SK-N-SH (cell line): ENCODE measurements at regions of chr17 and their contacts with region 1.

Region 1: GRCh38 chr17:63478791-63479494 is 2.1 kb downstream of the ACE start:
- DNase-seq: peak; percentile 94
- H3K4me3 ChIP-seq: no peak overlapping the region
- H3K27ac ChIP-seq: peak overlapping the region in 1 of 2 experiments; percentile 84; a peak in 2 of 4 replicates
- H3K4me1 ChIP-seq: peaks cover 9 to 67% of the 10 kb centered on the region in 2 experiments
- H3K27me3 ChIP-seq: no peaks in the 10 kb centered on the region
- CTCF ChIP-seq: peak; percentile 98
- EP300 ChIP-seq: no peak
- RAD21 ChIP-seq: peak; percentile 88

Region 2: DNA sequence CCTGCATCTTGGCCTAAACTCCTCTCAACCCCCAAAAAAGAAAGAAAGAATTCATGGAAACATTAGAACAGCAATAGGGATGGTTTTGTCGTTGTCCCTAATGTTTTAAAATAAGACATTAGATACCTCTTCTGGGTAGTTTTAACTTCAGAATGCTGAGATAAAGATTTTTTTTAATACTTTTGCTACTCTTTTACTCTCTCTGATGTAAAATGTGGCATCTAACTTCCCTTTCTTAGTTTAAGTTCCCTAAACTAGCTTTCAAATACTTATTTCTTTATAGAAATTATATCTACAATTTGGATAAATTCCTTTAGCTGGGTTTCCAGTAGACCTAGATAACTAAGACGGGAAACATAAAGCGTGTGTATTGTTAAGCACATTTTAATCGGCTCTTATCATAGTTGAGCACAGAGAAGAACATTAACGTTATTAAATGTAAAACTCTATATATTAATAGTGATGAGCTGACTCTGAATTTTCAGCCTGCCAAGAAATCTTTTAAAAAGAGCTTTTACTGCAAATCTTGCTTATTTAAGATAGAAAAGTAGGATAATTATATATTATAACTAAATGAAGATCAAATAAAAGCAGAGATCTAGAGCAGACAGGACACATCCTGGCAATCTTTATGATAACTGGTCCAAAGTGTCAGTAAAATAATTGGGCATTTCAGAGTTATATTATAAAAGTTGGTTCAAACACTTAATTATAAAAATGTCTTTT is 216.0 kb before region 1 on chr17:
- CTCF ChIA-PET with region 1: no interaction called
- POLR2A ChIA-PET with region 1: no interaction called
- DNase-seq: no peak
- H3K4me3 ChIP-seq: no peak overlapping the region
- H3K27ac ChIP-seq: no peak overlapping the region; a peak in 1 of 4 replicates
- H3K4me1 ChIP-seq: peaks cover 0 to 2% of the 10 kb centered on the region in 2 experiments; a peak in 3 of 4 replicates
- H3K27me3 ChIP-seq: no peaks in the 10 kb centered on the region
- CTCF ChIP-seq: no peak
- EP300 ChIP-seq: no peak
- RAD21 ChIP-seq: no peak

Region 3: DNA sequence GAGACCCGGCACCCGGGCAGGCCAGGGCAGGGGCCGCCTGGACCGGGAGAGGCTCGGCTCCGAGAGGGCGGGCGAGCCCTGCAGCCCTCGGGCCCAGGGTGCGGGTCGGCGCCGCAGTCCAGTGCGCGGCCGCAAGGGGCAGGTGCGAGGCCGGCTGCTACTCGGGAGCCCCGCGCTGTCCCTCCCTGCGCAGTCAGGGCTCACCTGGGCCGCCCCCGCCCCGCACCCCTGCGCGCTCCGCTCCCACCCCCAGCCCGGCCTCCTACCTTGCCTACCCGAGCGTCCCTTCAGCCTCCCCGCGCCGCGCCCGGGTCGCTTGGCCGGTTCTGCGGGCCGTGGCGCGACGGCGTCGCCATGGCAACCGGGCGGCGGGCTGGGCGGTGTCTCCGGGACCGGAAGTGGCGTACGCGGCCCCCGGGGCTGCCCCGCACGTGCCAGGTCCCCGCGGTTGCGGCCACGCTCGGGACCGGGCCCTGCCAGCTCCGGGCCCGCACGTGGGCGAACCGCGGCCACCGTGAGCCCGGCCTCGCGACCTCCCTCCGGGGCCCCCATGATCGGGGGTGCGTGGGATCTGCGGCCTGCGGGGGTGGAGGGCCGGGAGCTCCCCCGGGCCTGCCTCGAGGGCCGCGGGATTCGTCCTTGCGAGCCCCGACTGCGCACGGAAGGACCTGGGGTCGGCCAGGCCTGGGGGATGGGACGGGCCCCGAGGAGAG is 32.8 kb before region 1 on chr17 and contains the start of gene CYB561:
- CTCF ChIA-PET with region 1: interaction called, 708 read pairs
- POLR2A ChIA-PET with region 1: interaction called, 212 read pairs
- DNase-seq: peak; percentile 97
- H3K4me3 ChIP-seq: peak within 1 kb of the TSS; percentile 56 to 64
- H3K27ac ChIP-seq: peak within 1 kb of the TSS; percentile 19 to 99; a peak in 2 of 4 replicates
- H3K4me1 ChIP-seq: peaks cover 8 to 69% of the 10 kb centered on the region in 2 experiments
- H3K27me3 ChIP-seq: no peaks in the 10 kb centered on the region
- CTCF ChIP-seq: peak; percentile 54
- EP300 ChIP-seq: no peak
- RAD21 ChIP-seq: peak; percentile 32
- polyA plus RNA-seq, gene CYB561: 28.3 and 38.6 TPM in 2 replicates

Region 4: DNA sequence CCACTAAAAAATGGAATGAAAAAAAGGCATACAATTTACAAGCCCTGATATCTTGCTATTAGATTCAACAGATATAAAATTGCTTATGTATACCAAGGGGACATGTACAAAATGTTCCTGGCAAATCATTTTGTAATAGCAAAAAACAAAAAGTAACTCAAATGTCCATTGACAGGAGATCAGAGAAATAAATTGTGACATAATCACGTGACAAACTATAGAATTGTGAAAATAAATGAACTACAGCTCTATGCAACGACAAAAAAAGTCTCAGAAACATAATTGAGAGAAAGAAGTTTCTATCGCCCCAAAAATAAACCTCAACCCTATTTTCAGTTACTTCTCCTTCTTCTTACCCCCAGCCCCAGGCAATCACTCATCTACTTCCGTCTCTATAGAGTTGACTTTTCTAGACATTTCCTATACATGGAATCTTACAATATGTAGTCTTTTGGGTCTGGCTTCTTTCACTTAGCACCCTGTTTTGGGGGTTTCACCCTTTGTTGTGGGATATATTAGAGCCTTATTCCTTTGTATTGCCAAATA is 14.2 kb before region 1 on chr17:
- CTCF ChIA-PET with region 1: interaction called, 35 read pairs
- POLR2A ChIA-PET with region 1: interaction called, 8 read pairs
- DNase-seq: no peak
- H3K4me3 ChIP-seq: no peak overlapping the region
- H3K27ac ChIP-seq: no peak overlapping the region
- H3K4me1 ChIP-seq: peaks cover 7 to 11% of the 10 kb centered on the region in 2 experiments
- H3K27me3 ChIP-seq: no peaks in the 10 kb centered on the region
- CTCF ChIP-seq: no peak
- EP300 ChIP-seq: no peak
- RAD21 ChIP-seq: no peak

Region 5: GRCh38 chr17:63497708-63498483 is 19.0 kb after region 1 on chr17:
- CTCF ChIA-PET with region 1: interaction called, 65 read pairs
- POLR2A ChIA-PET with region 1: interaction called, 4 read pairs
- DNase-seq: peak; percentile 78
- H3K4me3 ChIP-seq: no peak overlapping the region
- H3K27ac ChIP-seq: peak overlapping the region in 1 of 2 experiments; percentile 43; a peak in 2 of 4 replicates
- H3K4me1 ChIP-seq: peaks cover 4 to 27% of the 10 kb centered on the region in 2 experiments; a peak in 1 of 4 replicates
- H3K27me3 ChIP-seq: peaks cover under 1% of the 10 kb centered on the region; the same call in 1 of the 2 replicates
- CTCF ChIP-seq: peak; percentile 37
- EP300 ChIP-seq: no peak
- RAD21 ChIP-seq: peak; percentile 35

Region 6: GRCh38 chr17:63549946-63550807 is 71.2 kb after region 1 on chr17 and contains the start of gene DCAF7:
- CTCF ChIA-PET with region 1: interaction called, 27 read pairs
- POLR2A ChIA-PET with region 1: interaction called, 8 read pairs
- DNase-seq: peak; percentile 100
- H3K4me3 ChIP-seq: peak within 1 kb of the TSS; percentile 85 to 93
- H3K27ac ChIP-seq: peak within 1 kb of the TSS; percentile 90 to 92
- H3K4me1 ChIP-seq: peaks cover 9 to 30% of the 10 kb centered on the region in 2 experiments; a peak in 3 of 4 replicates
- H3K27me3 ChIP-seq: no peaks in the 10 kb centered on the region
- CTCF ChIP-seq: no peak
- EP300 ChIP-seq: no peak; a peak in 1 of 4 replicates
- RAD21 ChIP-seq: peak; percentile 6; the same call in 1 of the 2 replicates
- polyA plus RNA-seq, gene DCAF7: 54.6 and 63.5 TPM in 2 replicates